ENCODE measurements at regions of chr11 and their contacts with region 1.

Region 1: DNA sequence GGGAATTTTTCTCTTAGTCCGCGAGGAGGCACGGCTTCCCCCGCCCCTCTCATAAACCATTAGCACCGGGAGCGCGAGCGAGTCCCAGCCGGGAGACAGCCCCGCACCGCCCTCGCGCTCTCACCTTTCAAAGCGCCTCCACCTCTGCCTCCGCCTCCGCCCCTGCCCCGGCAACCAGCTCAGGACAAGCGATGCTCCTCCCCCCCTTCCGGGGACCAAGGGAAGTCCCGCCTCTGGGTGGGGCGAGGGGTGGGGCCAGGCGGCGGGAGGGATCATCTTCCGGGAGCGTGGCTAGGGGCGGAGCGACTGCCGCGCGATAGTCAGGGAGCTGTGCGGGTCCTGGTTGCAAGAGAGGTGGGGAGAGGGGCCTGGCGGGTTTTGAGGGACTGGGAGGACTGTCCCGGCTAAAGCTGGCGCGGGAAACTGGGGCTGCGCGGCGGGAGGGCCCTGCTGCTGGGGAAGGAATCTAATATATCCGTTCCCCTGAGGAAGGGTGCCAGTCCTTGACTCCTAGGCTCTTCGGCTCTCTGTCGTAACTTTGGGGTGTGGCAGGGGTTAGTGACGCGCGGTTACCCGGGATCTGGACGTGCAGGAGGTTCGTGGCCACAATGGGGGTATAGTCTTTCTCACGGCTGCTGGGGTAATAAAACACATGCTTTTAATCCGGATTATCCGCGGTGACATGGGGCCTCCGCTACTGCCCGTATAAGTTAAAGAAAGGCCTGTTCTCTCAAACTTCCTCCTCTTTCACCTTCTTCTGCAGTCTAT is at the starts of genes CCDC82 and JRKL:
- DNase-seq: peak; percentile 99 to 100
- H3K4me3 ChIP-seq: peak within 1 kb of the TSS; percentile 82
- H3K4me3 Mint-ChIP-seq: peak within 1 kb of the TSS; percentile 82
- H3K27ac Mint-ChIP-seq: peak within 1 kb of the TSS; percentile 88
- H3K4me1 ChIP-seq: peaks cover 28% of the 10 kb centered on the region
- H3K4me1 Mint-ChIP-seq: peaks cover 19% of the 10 kb centered on the region
- H3K27me3 ChIP-seq: no peaks in the 10 kb centered on the region
- H3K27me3 Mint-ChIP-seq: no peaks in the 10 kb centered on the region
- CTCF ChIP-seq: no peak
- total RNA-seq, gene CCDC82: 38.2 TPM in 2 replicates
- total RNA-seq, gene JRKL: 16.6 and 17.4 TPM in 2 replicates

Region 2: DNA sequence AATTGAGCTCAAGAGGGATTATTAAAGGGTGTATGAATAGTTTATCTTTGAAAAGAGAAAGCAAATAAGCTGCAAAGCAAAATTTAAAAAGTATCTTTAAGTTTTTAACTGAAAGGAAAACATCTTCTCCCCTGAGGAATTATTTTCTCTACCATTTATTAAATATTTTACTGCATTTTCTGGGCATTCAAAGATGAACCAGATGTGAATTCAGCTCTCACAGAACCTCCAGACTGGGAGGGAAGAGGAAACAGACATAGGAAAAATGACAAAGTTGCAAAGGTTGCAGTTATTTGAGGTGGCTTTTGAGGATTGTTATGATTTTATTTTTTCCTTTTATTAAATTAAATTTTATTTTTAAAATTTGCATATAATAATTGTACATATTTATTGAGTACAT is 1036.2 kb before region 1 on chr11:
- CTCF ChIA-PET with region 1: no interaction called
- POLR2A ChIA-PET with region 1: interaction called, 11 read pairs
- intact Hi-C with region 1: no loop called
- DNase-seq: no peak
- H3K4me3 ChIP-seq: no peak overlapping the region
- H3K4me3 Mint-ChIP-seq: no peak overlapping the region
- H3K27ac Mint-ChIP-seq: no peak overlapping the region
- H3K4me1 ChIP-seq: peaks cover 4% of the 10 kb centered on the region
- H3K4me1 Mint-ChIP-seq: no peaks in the 10 kb centered on the region
- H3K27me3 ChIP-seq: no peaks in the 10 kb centered on the region
- H3K27me3 Mint-ChIP-seq: no peaks in the 10 kb centered on the region
- CTCF ChIP-seq: no peak

Region 3: DNA sequence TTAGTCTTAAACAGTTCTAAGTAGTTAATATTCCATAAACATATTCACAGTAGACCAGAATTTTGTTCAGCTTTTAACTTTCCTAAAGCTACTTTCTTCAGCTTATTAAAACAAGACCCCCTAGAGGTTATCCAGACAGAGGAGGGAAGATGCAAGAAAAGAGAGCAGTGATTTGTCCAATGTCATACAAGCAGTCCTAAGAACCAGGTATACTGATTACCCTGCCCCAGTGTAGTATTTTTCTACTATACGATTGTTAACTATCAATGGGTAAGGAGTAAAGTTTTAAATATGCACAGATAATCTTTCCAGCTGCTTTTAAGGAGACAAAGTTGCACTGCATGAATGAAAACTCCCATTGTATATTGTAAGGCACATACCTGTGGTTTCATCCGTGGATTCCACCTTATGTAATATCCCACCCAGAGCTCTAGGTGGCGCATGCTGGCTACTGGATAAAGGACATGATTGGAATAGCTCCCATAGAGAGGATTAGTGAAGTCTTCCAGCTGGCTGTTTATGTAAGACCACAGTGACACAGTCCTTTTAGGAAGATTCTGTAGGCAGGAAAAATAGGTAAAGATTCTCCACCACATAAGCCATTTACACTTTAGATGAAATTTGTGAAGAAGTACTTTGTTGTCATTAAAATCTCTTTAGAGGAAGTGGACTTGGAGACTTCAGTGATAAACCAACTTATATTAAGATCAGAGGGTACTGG is 554.0 kb before region 1 on chr11:
- CTCF ChIA-PET with region 1: interaction called, 35 read pairs
- POLR2A ChIA-PET with region 1: interaction called, 10 read pairs
- intact Hi-C with region 1: loop called (anchors 1 kb)
- DNase-seq: peak; percentile 84 to 85
- H3K4me3 ChIP-seq: no peak overlapping the region
- H3K4me3 Mint-ChIP-seq: no peak overlapping the region
- H3K27ac Mint-ChIP-seq: no peak overlapping the region
- H3K4me1 ChIP-seq: no peaks in the 10 kb centered on the region; the same call in 1 of the 2 replicates
- H3K4me1 Mint-ChIP-seq: peaks cover 6% of the 10 kb centered on the region
- H3K27me3 ChIP-seq: no peaks in the 10 kb centered on the region
- H3K27me3 Mint-ChIP-seq: no peaks in the 10 kb centered on the region
- CTCF ChIP-seq: peak; percentile 97 to 98

Region 4: GRCh38 chr11:95923728-95924413 is 466.0 kb before region 1 on chr11 and contains the start of gene MTMR2:
- CTCF ChIA-PET with region 1: interaction called, 3 read pairs
- POLR2A ChIA-PET with region 1: interaction called, 9 read pairs
- intact Hi-C with region 1: loop called (anchors 2 kb)
- DNase-seq: peak; percentile 88 to 91
- H3K4me3 ChIP-seq: peak within 1 kb of the TSS; percentile 84
- H3K4me3 Mint-ChIP-seq: peak within 1 kb of the TSS; percentile 88
- H3K27ac Mint-ChIP-seq: peak within 1 kb of the TSS; percentile 96
- H3K4me1 ChIP-seq: peaks cover 6% of the 10 kb centered on the region
- H3K4me1 Mint-ChIP-seq: peaks cover 13% of the 10 kb centered on the region
- H3K27me3 ChIP-seq: no peaks in the 10 kb centered on the region
- H3K27me3 Mint-ChIP-seq: no peaks in the 10 kb centered on the region
- CTCF ChIP-seq: peak in 1 of 2 experiments; percentile 14
- total RNA-seq, gene MTMR2: 75.2 and 76.4 TPM in 2 replicates

Region 5: GRCh38 chr11:96267496-96268032 is 122.3 kb before region 1 on chr11:
- CTCF ChIA-PET with region 1: no interaction called
- POLR2A ChIA-PET with region 1: no interaction called
- intact Hi-C with region 1: no loop called
- DNase-seq: no peak
- H3K4me3 ChIP-seq: no peak overlapping the region
- H3K4me3 Mint-ChIP-seq: no peak overlapping the region
- H3K27ac Mint-ChIP-seq: no peak overlapping the region
- H3K4me1 ChIP-seq: peaks cover 25% of the 10 kb centered on the region
- H3K4me1 Mint-ChIP-seq: peaks cover 40% of the 10 kb centered on the region
- H3K27me3 ChIP-seq: no peaks in the 10 kb centered on the region
- H3K27me3 Mint-ChIP-seq: no peaks in the 10 kb centered on the region
- CTCF ChIP-seq: no peak

Region 6: DNA sequence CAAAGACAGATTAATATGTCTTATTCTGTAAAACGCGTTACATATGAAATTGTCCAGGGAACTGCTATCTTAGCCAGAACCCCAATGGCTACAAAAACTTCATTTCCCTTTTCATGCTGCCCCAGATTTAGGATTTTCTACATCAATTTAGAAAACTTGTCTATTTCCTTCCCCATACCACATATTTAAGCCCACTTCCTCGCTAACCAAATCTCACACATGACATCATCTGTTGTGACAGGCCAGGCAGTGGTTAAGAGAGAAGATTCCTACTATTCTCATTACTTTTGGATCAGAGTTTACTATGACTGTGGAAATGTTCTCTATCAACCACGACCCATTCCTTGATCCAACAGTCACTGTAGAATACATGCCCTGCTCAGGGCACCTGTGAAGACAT is 16.1 kb before region 1 on chr11:
- CTCF ChIA-PET with region 1: interaction called, 3 read pairs
- POLR2A ChIA-PET with region 1: interaction called, 10 read pairs
- intact Hi-C with region 1: no loop called
- DNase-seq: no peak
- H3K4me3 ChIP-seq: no peak overlapping the region
- H3K4me3 Mint-ChIP-seq: no peak overlapping the region
- H3K27ac Mint-ChIP-seq: no peak overlapping the region
- H3K4me1 ChIP-seq: no peaks in the 10 kb centered on the region
- H3K4me1 Mint-ChIP-seq: no peaks in the 10 kb centered on the region
- H3K27me3 ChIP-seq: no peaks in the 10 kb centered on the region
- H3K27me3 Mint-ChIP-seq: no peaks in the 10 kb centered on the region
- CTCF ChIP-seq: no peak

Region 7: DNA sequence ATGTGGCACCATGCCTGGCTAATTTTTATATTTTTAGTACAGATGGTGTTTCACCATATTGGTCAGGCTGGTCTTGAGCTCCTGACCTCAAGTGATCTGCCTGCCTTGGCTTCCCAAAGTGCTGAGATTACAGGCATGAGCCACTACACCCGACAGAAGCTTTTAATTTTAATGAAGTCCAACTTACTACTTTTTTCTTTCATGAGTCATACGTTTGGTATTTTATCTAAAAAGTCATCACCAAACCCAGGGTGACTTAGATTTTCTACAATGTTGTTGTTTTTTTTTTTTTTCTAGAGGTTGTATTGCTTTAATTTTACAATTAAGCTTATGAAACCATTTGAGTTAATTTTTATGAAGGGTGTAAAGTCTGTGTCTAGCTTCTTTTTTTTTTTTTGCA is 34.8 kb after region 1 on chr11:
- CTCF ChIA-PET with region 1: interaction called, 5 read pairs
- POLR2A ChIA-PET with region 1: interaction called, 3 read pairs
- intact Hi-C with region 1: loop called (anchors 2 kb)
- DNase-seq: no peak
- H3K4me3 ChIP-seq: no peak overlapping the region
- H3K4me3 Mint-ChIP-seq: no peak overlapping the region
- H3K27ac Mint-ChIP-seq: no peak overlapping the region
- H3K4me1 ChIP-seq: peaks cover 5% of the 10 kb centered on the region; the same call in 1 of the 2 replicates
- H3K4me1 Mint-ChIP-seq: no peaks in the 10 kb centered on the region
- H3K27me3 ChIP-seq: no peaks in the 10 kb centered on the region; the same call in 1 of the 2 replicates
- H3K27me3 Mint-ChIP-seq: peaks cover 19% of the 10 kb centered on the region
- CTCF ChIP-seq: no peak